ENCODE measurements at regions of chr1 and their contacts with region 1.

Region 1: GRCh38 chr1:156226116-156226538 is 13.3 kb downstream of the PMF1 start:
- DNase-seq: no peak
- ATAC-seq: no peak
- H3K4me3 ChIP-seq: no peak overlapping the region
- H3K4me3 Mint-ChIP-seq: no peak overlapping the region
- H3K27ac ChIP-seq: no peak overlapping the region
- H3K27ac Mint-ChIP-seq: no peak overlapping the region
- H3K4me1 ChIP-seq: no peaks in the 10 kb centered on the region
- H3K4me1 Mint-ChIP-seq: peaks cover 4% of the 10 kb centered on the region
- H3K27me3 ChIP-seq: no peaks in the 10 kb centered on the region
- H3K27me3 Mint-ChIP-seq: no peaks in the 10 kb centered on the region
- CTCF ChIP-seq: no peak

Region 2: GRCh38 chr1:156090822-156091188 is 135.3 kb before region 1 on chr1:
- CTCF ChIA-PET with region 1: interaction called, 51 read pairs
- POLR2A ChIA-PET with region 1: no interaction called
- intact Hi-C with region 1: loop called (anchors 1 kb)
- DNase-seq: peak; percentile 91
- ATAC-seq: peak; percentile 96
- H3K4me3 ChIP-seq: no peak overlapping the region
- H3K4me3 Mint-ChIP-seq: no peak overlapping the region
- H3K27ac ChIP-seq: no peak overlapping the region
- H3K27ac Mint-ChIP-seq: peak overlapping the region; percentile 74
- H3K4me1 ChIP-seq: peaks cover 8 to 11% of the 10 kb centered on the region in 2 donors
- H3K4me1 Mint-ChIP-seq: peaks cover 6% of the 10 kb centered on the region
- H3K27me3 ChIP-seq: peaks cover 0 to 21% (median 7%) of the 10 kb centered on the region in 4 experiments
- H3K27me3 Mint-ChIP-seq: peaks cover 10% of the 10 kb centered on the region
- CTCF ChIP-seq: peak; percentile 91

Region 3: GRCh38 chr1:156140879-156141252 is 85.3 kb before region 1 on chr1:
- CTCF ChIA-PET with region 1: interaction called, 381 read pairs
- POLR2A ChIA-PET with region 1: interaction called, 8 read pairs
- intact Hi-C with region 1: loop called (anchors 1 kb)
- DNase-seq: no peak
- ATAC-seq: no peak
- H3K4me3 ChIP-seq: no peak overlapping the region
- H3K4me3 Mint-ChIP-seq: no peak overlapping the region
- H3K27ac ChIP-seq: no peak overlapping the region
- H3K27ac Mint-ChIP-seq: no peak overlapping the region
- H3K4me1 ChIP-seq: peaks cover 0 to 1% of the 10 kb centered on the region in 2 donors
- H3K4me1 Mint-ChIP-seq: peaks cover 1% of the 10 kb centered on the region
- H3K27me3 ChIP-seq: peaks cover 0 to 13% (median 4%) of the 10 kb centered on the region in 4 experiments
- H3K27me3 Mint-ChIP-seq: peaks cover 16% of the 10 kb centered on the region
- CTCF ChIP-seq: no peak

Region 4: DNA sequence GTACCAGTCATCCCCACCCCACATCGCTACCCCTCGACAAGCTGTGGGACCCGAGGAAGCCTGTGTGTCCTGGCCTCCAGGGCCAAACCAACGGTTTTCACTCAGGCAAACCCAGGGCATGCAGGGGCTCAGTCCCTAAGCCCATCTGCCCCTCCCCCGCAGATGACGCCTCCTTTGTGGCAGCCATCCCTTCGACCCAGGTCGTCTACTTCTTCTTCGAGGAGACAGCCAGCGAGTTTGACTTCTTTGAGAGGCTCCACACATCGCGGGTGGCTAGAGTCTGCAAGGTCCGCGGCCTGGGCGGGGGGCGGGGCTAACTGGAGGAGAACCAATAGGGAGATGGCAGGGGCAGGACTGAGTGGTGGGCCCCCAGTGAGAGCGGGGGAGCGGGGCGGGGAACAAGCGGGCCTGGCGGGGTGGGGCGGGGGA is 65.4 kb before region 1 on chr1:
- CTCF ChIA-PET with region 1: interaction called, 39 read pairs
- POLR2A ChIA-PET with region 1: no interaction called
- intact Hi-C with region 1: no loop called
- DNase-seq: peak; percentile 56
- ATAC-seq: peak; percentile 84
- H3K4me3 ChIP-seq: peak overlapping the region in 4 of 5 experiments; percentile 25 to 45 (median 34)
- H3K4me3 Mint-ChIP-seq: peak overlapping the region; percentile 80
- H3K27ac ChIP-seq: no peak overlapping the region
- H3K27ac Mint-ChIP-seq: peak overlapping the region; percentile 41
- H3K4me1 ChIP-seq: peaks cover 41 to 55% of the 10 kb centered on the region in 2 donors
- H3K4me1 Mint-ChIP-seq: peaks cover 55% of the 10 kb centered on the region
- H3K27me3 ChIP-seq: peaks cover 0 to 22% (median 7%) of the 10 kb centered on the region in 4 experiments
- H3K27me3 Mint-ChIP-seq: peaks cover 32% of the 10 kb centered on the region
- CTCF ChIP-seq: no peak

Region 5: DNA sequence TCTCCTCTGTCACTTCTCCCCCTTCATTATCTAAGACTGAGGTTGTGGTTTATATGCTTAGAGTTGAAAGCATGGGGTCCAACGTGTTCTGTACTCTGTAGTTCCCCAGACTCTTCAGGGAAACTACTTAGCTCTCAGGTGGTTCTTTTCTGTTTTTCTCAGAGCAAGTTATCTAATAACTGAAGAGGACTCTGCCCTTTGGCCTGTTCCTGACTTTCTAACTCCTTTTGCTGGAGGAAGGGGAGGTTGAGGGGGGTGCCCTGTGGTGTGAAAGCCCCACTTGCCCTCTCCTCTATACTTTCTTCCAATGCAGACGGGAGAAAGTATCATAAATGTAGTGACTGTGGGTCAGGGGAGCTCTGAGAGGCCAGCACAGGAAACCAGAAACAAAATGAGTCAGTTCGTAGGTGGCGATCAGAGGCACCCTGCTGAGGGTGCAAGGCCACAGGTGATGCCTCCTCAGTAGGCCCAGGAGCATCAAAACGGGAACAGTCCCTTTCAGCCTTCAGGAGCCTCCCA is 27.2 kb before region 1 on chr1:
- CTCF ChIA-PET with region 1: interaction called, 27 read pairs
- POLR2A ChIA-PET with region 1: no interaction called
- intact Hi-C with region 1: no loop called
- DNase-seq: no peak
- ATAC-seq: no peak
- H3K4me3 ChIP-seq: no peak overlapping the region
- H3K4me3 Mint-ChIP-seq: no peak overlapping the region
- H3K27ac ChIP-seq: no peak overlapping the region
- H3K27ac Mint-ChIP-seq: no peak overlapping the region
- H3K4me1 ChIP-seq: peaks cover 6 to 14% of the 10 kb centered on the region in 2 donors
- H3K4me1 Mint-ChIP-seq: peaks cover 42% of the 10 kb centered on the region
- H3K27me3 ChIP-seq: no peaks in the 10 kb centered on the region
- H3K27me3 Mint-ChIP-seq: no peaks in the 10 kb centered on the region
- CTCF ChIP-seq: no peak

Region 6: DNA sequence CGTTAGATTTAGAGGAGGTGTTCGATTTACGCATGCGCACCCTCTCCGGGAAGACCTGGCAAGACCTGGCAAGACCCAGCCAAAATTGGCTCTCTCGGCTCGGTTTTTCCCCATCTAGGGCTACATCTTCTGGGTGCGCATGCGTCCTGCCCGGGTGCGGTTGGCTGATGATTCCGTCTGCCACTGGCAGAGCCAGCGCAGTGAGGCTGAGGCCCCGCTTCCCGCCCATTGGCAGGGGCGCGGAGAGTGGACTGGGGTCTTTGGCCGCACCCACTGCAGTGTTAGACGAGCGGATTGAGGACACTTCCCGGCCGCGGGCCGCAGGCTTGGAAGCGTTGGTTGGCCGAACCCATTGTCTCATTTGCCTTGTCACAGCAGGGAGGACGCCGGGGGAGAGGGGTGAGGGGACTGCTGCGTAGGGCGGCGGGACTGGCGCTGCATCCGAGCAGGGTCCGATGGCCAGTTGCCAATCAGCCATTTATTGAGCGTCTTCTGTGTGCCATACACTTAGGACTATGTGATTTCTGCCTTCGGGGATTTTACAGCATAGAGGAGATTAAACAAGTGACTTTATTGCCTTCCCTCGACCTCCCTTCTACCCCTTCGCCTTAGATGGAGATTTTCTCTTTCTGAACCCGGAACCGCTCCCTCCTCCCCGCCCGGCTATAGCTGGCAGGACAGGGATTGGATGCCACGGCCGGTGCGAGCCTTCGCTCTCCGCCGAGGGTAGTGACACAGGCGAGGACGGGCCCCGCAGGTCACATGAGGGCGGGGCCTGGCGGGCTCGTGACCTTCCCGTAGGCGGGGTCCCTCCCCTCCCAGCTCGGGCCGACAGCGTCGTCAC is 230.7 kb after region 1 on chr1:
- CTCF ChIA-PET with region 1: no interaction called
- POLR2A ChIA-PET with region 1: interaction called, 14 read pairs
- intact Hi-C with region 1: no loop called
- DNase-seq: peak; percentile 98
- ATAC-seq: peak; percentile 85
- H3K4me3 ChIP-seq: peak overlapping the region; percentile 41 to 87 (median 84)
- H3K4me3 Mint-ChIP-seq: peak overlapping the region; percentile 96
- H3K27ac ChIP-seq: peak overlapping the region; percentile 97 to 100
- H3K27ac Mint-ChIP-seq: peak overlapping the region; percentile 98
- H3K4me1 ChIP-seq: peaks cover 3 to 15% of the 10 kb centered on the region in 2 donors
- H3K4me1 Mint-ChIP-seq: peaks cover 17% of the 10 kb centered on the region
- H3K27me3 ChIP-seq: no peaks in the 10 kb centered on the region
- H3K27me3 Mint-ChIP-seq: no peaks in the 10 kb centered on the region
- CTCF ChIP-seq: no peak